Pancreas (tissue), 10 donors: ENCODE measurements at regions of chr16 and their contacts with region 1.

Region 1: GRCh38 chr16:89749647-89750046 is 28.3 kb downstream of the ZNF276 start:
- DNase-seq: no peak
- ATAC-seq: peak in 3 of 4 donors; percentile 50 to 52 (median 51)
- H3K4me3 ChIP-seq: no peak overlapping the region
- H3K27ac ChIP-seq: no peak overlapping the region
- H3K4me1 ChIP-seq: no peaks in the 10 kb centered on the region
- H3K27me3 ChIP-seq: no peaks in the 10 kb centered on the region
- CTCF ChIP-seq: no peak

Region 2: DNA sequence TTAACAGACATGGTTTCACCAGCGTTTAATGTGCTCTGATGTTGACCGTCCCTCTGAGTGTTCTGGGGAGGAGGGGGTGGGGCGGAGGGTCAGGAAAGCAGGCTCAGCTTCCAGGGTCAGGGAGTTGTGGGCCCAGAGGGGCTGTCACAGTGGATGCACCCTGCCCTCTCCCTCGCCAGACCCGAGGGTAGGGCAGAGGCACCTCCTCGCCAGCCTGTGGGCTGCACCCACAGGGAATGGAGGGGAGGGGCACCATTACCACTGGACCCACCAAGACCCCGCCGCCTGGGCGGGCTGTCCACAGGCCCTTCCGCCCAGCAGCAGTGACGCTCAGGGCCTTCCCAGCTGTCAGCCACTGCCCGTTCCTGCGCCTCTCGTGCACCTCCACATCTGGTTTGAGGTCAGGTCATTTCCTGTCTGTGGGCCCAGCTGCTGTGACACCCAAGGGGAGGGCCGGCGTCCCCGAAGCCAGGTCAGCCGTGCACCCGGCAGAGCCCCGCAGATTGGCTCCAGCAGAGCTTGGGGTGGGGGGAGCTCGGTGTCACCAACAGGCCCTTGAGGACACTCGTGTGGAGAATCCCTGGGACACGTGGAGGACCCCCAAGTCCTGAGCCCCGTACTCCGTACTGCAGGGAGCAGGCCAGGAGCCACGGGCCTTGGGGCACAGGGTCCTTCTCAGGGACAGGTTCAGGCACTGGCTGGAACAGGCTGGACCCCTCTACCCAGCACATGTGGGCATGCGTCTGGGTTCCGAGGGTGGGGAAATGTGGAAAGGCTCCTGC is 53.1 kb before region 1 on chr16:
- intact Hi-C with region 1: no loop called
- DNase-seq: peak in 3 of 6 donors; percentile 23 to 76 (median 41)
- ATAC-seq: no peak
- H3K4me3 ChIP-seq: no peak overlapping the region
- H3K27ac ChIP-seq: no peak overlapping the region
- H3K4me1 ChIP-seq: peaks cover 0 to 9% (median 7%) of the 10 kb centered on the region in 3 donors
- H3K27me3 ChIP-seq: no peaks in the 10 kb centered on the region
- CTCF ChIP-seq: no peak

Region 3: DNA sequence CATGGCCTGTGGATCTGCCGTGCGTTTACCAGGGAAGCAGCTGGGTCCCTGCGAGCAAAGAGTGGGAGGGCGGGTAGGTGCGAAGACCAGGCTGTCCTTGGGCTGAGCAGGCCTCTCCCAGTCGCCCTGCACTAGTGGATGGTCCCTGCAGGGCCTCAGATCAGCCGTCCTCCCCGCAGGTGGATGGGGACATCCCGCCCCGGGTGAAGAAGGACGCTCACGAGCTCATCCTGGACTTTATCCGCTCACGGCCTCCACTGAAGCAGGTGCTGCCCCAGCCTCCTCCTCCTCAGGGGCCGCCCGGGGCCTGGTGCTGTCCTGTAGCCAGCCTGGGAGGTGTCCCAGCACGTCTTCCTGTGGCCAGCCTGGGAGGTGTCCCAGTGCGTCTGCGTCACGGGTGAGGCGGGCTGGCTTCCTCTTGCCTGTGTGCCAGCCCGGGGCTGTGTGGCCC is 105.8 kb after region 1 on chr16:
- intact Hi-C with region 1: loop called in 2 of 3 experiments (anchors 5 to 10 kb)
- DNase-seq: no peak
- ATAC-seq: peak in 1 of 4 donors; percentile 20
- H3K4me3 ChIP-seq: no peak overlapping the region
- H3K27ac ChIP-seq: no peak overlapping the region
- H3K4me1 ChIP-seq: no peaks in the 10 kb centered on the region
- H3K27me3 ChIP-seq: no peaks in the 10 kb centered on the region
- CTCF ChIP-seq: no peak